Activated CD8-positive, alpha-beta memory T cell treated with anti-CD3 and anti-CD28 coated beads, Interleukin-2, amount 10 ng/mL, durations not matched to agents 7 days and 5 days (primary cell): ENCODE measurements at regions of chr1 and their contacts with region 1.

Region 1: DNA sequence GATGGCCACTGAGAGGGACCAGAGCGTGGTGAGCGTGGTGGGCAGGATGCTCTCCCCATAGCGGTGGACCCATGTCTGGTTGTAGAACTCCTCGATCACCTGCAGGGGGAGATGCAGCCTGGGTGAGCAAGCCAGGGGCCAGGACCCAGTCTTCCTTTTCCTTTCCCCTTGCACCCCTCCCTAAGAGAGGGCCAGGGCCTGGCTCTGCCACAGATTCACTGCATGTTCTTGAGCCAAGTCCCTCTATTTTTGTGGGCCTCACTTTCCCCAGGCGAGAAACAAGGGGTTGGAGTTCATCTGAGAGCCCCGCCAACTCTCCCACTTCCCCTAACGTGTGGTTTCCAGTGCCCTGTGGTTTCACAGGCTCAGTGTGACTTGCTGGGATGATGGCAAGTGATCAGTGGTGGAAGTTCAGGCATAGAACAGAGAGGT is 27.5 kb downstream of the SLC2A1 start:
- DNase-seq: peak; percentile 83
- ATAC-seq: peak; percentile 52
- H3K4me3 Mint-ChIP-seq: peak overlapping the region; percentile 67
- H3K27ac Mint-ChIP-seq: peak overlapping the region; percentile 96
- H3K4me1 Mint-ChIP-seq: peaks cover 87% of the 10 kb centered on the region
- H3K27me3 Mint-ChIP-seq: no peaks in the 10 kb centered on the region

Region 2: DNA sequence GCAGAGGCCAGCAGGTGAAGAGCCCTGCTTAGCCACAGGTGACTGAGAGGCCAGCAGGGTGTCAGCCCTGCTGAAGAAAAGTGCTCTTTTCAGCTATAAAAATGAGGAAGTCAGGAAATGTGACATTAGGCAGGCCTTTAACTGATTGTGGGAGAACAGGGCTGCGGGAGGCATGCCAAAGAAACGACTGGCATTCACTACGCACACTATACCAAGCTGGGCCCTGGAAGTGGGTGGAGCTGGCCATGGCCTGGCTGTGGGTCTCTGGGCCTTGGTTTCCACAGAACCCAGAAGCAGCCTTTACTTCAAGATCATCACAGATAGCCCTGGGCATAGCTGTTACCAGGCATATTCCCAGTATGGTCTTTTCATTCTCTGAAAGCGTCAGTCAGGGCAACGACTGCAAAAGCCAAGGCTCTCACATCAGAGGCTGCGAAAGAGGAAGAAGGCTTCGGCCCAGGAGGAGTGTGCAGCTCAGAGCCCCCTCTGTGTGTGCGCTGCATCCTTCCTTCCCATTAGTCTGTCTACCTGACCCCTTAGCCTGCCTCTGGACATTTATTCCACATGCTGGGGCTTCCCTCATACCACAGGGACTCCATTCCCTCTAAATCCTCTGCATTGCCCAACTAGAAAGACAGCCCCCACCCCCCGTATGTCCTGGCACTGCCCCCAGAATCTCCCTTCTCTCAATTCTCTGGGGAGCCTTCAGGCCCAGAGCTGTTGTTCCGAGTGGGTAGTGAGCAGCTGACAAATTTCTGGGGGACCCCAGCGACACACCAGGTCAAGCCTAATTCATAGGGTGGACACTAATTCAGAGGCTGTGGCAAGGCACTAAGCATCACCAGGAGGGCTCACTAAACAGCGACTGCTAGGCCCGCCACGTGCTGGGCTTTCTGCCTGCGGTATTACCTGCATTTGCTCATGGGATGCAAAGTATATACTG is 13.4 kb after region 1 on chr1:
- CTCF ChIA-PET with region 1: interaction called, 22 read pairs
- DNase-seq: no peak
- ATAC-seq: no peak
- H3K4me3 Mint-ChIP-seq: peak overlapping the region; percentile 54
- H3K27ac Mint-ChIP-seq: peak overlapping the region; percentile 88
- H3K4me1 Mint-ChIP-seq: peaks cover 95% of the 10 kb centered on the region
- H3K27me3 Mint-ChIP-seq: no peaks in the 10 kb centered on the region

Region 3: GRCh38 chr1:42958488-42959319 is 27.6 kb after region 1 on chr1 and contains the start of gene SLC2A1:
- CTCF ChIA-PET with region 1: interaction called, 52 read pairs
- DNase-seq: peak; percentile 98
- ATAC-seq: peak; percentile 87
- H3K4me3 Mint-ChIP-seq: peak within 1 kb of the TSS; percentile 95
- H3K27ac Mint-ChIP-seq: peak within 1 kb of the TSS; percentile 99
- H3K4me1 Mint-ChIP-seq: peaks cover 47% of the 10 kb centered on the region
- H3K27me3 Mint-ChIP-seq: peaks cover 8% of the 10 kb centered on the region
- total RNA-seq, gene SLC2A1: 113 to 140 TPM